Activated naive CD4-positive, alpha-beta T cell treated with anti-CD3 and anti-CD28 coated beads for 36 hours (primary cell): ENCODE measurements at regions of chr2 and their contacts with region 1.

Region 1: GRCh38 chr2:88055371-88056128 is at the start of gene KRCC1:
- DNase-seq: peak; percentile 94
- H3K4me3 Mint-ChIP-seq: peak within 1 kb of the TSS; percentile 99
- H3K27ac Mint-ChIP-seq: peak within 1 kb of the TSS; percentile 98
- H3K4me1 Mint-ChIP-seq: peaks cover 62% of the 10 kb centered on the region
- H3K27me3 Mint-ChIP-seq: no peaks in the 10 kb centered on the region
- total RNA-seq, gene KRCC1: 2.4 to 2.5 TPM

Region 2: DNA sequence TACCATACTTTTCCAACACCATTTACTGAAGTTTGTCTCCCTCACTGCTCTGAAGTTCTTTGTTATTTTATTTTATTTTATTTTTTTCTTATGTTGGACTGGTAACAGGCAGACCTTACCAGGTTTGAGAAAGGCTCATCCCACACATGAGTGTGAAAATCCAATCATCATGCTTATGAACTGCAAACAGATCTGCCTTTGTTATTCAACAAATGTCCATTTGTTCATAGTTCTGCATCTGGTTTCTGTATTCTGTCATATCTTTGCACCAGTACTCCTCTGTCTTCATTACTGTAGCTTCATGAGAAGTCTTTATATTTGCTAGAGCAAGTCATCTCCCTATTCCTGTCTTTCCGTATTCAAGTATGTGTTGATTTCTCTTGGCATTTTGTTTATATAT is 44.5 kb before region 1 on chr2:
- CTCF ChIA-PET with region 1: interaction called, 3 read pairs
- intact Hi-C with region 1: loop called (anchors 2 kb)
- DNase-seq: no peak
- H3K4me3 Mint-ChIP-seq: no peak overlapping the region
- H3K27ac Mint-ChIP-seq: no peak overlapping the region
- H3K4me1 Mint-ChIP-seq: peaks cover 6% of the 10 kb centered on the region
- H3K27me3 Mint-ChIP-seq: no peaks in the 10 kb centered on the region

Region 3: GRCh38 chr2:88027697-88028389 is 27.7 kb before region 1 on chr2:
- CTCF ChIA-PET with region 1: no interaction called
- intact Hi-C with region 1: no loop called
- DNase-seq: no peak
- H3K4me3 Mint-ChIP-seq: peak overlapping the region; percentile 66
- H3K27ac Mint-ChIP-seq: peak overlapping the region; percentile 68
- H3K4me1 Mint-ChIP-seq: peaks cover 12% of the 10 kb centered on the region
- H3K27me3 Mint-ChIP-seq: no peaks in the 10 kb centered on the region

Region 4: GRCh38 chr2:88074854-88075292 is 19.3 kb after region 1 on chr2:
- CTCF ChIA-PET with region 1: interaction called, 12 read pairs
- intact Hi-C with region 1: no loop called
- DNase-seq: no peak
- H3K4me3 Mint-ChIP-seq: no peak overlapping the region
- H3K27ac Mint-ChIP-seq: no peak overlapping the region
- H3K4me1 Mint-ChIP-seq: no peaks in the 10 kb centered on the region
- H3K27me3 Mint-ChIP-seq: no peaks in the 10 kb centered on the region

Region 5: GRCh38 chr2:88159955-88160415 is 104.4 kb after region 1 on chr2:
- CTCF ChIA-PET with region 1: interaction called, 174 read pairs
- intact Hi-C with region 1: loop called (anchors 1 kb)
- DNase-seq: peak; percentile 69
- H3K4me3 Mint-ChIP-seq: no peak overlapping the region
- H3K27ac Mint-ChIP-seq: no peak overlapping the region
- H3K4me1 Mint-ChIP-seq: no peaks in the 10 kb centered on the region
- H3K27me3 Mint-ChIP-seq: no peaks in the 10 kb centered on the region

Region 6: DNA sequence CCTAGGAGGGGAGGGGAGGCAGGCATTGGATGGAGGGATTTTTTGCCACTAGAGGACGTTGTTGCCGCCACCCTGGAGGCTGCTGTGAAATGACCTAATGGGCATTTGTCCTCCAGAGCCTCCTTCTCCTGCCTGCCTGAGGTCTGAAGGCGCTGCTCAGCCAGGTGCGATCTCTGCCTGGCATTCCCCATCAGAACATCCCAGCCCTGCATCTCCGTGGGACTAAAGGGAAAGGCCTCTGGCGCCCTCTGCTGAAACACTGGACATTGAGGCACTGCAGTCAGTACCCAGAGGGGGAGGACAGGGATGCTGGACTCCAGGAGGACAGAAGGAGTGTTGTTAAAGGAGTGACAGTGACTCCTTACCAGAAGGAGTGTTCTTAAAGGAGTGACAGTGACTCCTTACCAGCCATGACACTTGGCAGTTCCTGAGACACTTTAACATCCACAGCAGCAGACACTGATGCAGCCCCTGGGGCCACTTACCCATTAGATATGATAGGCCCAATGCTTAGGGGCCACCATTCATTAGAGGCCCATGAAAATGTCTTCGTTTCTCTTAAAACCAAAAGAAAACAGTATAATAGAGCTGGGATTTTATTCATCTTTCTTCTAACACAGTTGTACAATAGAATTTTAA is 131.6 kb after region 1 on chr2:
- CTCF ChIA-PET with region 1: interaction called, 25 read pairs
- intact Hi-C with region 1: loop called (anchors 1 kb)
- DNase-seq: peak; percentile 76
- H3K4me3 Mint-ChIP-seq: no peak overlapping the region
- H3K27ac Mint-ChIP-seq: no peak overlapping the region
- H3K4me1 Mint-ChIP-seq: peaks cover 20% of the 10 kb centered on the region
- H3K27me3 Mint-ChIP-seq: peaks cover 1% of the 10 kb centered on the region

Region 7: GRCh38 chr2:88627056-88627855 is 571.7 kb after region 1 on chr2 and contains the start of gene EIF2AK3:
- CTCF ChIA-PET with region 1: no interaction called
- intact Hi-C with region 1: loop called (anchors 2 kb)
- DNase-seq: peak; percentile 96
- H3K4me3 Mint-ChIP-seq: peak within 1 kb of the TSS; percentile 91
- H3K27ac Mint-ChIP-seq: peak within 1 kb of the TSS; percentile 85
- H3K4me1 Mint-ChIP-seq: peaks cover 14% of the 10 kb centered on the region
- H3K27me3 Mint-ChIP-seq: no peaks in the 10 kb centered on the region
- total RNA-seq, gene EIF2AK3: 10.0 to 13.7 TPM

Region 8: DNA sequence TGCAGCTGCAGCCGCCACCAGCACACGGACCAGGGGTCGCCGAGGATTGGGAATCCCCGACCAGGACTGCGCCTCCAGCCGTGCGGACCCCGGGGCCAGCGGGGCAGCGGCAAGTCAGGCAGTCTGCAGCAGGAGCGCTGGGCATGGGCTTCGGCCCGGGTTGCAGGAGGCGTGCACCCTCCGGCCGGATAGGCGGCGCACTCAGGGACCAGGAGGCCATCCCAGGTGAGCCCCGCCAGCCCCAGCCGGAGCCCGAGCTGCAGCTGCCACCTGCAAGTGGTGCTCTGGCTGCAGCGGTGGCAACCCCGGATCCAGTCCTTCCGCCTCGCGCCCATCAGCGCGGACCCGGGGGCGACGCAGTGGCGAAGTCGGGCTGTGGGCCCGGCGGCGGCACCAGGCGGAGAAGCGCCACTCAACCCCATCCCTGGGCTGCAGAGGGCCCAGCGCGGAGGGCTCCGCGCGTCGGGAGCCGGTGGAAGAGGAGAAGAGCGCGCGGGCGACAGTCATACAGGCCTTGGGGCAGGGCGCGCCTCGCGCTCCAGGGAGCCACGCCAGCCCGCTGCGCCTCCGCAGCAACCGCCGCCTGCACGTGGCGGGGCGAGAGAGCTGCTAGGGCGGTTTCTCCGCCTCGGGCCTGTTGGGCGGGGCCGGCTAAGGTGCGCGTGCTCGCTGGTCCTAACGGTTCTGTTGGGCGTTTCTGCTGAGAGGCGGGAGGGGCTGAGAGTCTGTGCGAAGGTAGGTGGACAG is 709.8 kb after region 1 on chr2:
- CTCF ChIA-PET with region 1: no interaction called
- intact Hi-C with region 1: loop called (anchors 5 kb)
- DNase-seq: peak; percentile 73
- H3K4me3 Mint-ChIP-seq: peak overlapping the region; percentile 77
- H3K27ac Mint-ChIP-seq: peak overlapping the region; percentile 27
- H3K4me1 Mint-ChIP-seq: peaks cover 11% of the 10 kb centered on the region
- H3K27me3 Mint-ChIP-seq: peaks cover 13% of the 10 kb centered on the region